GM10248 (cell line): ENCODE measurements at regions of chr4 and their contacts with region 1.

Region 1: GRCh38 chr4:145760961-145761929 is 81.3 kb downstream of the C4orf51 start:
- DNase-seq: no peak
- CTCF ChIP-seq: no peak

Region 2: GRCh38 chr4:145773581-145774234 is 12.5 kb after region 1 on chr4:
- CTCF ChIA-PET with region 1: interaction called, 16 read pairs
- POLR2A ChIA-PET with region 1: no interaction called
- DNase-seq: peak; percentile 29
- CTCF ChIP-seq: no peak

Region 3: DNA sequence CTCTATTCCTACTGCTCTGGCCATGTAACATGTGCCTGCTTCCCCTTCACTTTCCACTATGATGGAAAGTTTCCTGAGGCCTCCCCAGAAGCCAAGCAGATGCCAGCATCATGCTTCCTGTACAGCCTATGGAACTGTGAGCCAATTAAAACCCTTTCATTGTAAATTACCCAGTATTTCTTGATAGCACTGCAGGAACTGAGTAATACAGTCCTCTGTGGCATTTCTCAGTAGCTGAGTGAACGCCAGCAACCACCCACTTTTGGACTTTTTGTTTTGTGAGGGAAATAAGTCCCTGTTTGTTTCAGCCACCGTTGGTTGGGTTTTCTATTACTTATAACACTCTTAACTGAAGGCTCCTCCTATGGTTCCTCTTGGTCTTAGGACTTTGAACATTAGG is 22.8 kb after region 1 on chr4:
- CTCF ChIA-PET with region 1: no interaction called
- POLR2A ChIA-PET with region 1: no interaction called
- DNase-seq: no peak
- CTCF ChIP-seq: no peak